ENCODE measurements at regions of chr18 and their contacts with region 1.

Region 1: DNA sequence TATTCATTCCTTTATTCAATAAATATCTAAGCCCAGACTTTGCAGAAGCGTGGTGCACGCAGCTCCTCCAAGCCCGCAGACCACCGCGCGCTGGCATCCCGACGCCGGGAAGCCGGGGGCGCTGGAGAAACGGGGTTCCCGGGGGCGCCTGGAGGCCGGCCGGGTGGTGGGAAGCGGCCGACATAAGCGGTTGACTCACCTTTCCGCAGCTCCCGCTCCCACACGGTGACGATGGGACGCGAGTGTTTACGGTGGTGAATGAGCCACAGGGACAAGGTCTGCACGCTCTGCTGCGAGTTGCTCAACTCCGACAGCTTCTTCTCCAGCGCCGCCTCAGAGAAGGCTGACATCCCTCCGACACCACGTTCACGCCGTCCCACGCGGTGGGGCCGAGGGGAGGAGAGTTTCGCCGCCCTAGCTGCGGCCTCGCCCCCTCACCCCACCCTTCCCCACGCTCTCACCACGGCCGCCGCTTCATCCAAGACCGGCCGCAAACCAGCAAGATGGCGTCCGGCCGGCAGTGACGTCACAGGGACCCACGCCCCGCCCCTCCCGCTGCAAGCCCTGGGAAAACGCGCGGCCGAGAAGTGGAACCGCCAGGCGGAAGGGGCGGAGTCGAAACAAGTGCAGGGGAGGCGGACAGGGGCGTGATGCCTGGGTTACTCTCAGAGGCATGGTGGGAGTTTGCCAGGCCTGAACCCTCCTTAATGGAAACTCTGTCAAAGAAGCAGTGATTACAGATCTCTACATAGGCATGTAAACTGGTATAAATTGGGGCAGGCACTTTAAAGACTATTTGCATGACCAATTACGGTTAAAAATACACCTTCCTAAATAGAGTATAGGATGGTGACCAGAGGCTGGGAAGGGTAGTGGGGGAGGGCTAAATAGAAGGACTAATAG is at the start of gene RPRD1A:
- DNase-seq: peak; percentile 94
- H3K4me3 Mint-ChIP-seq: peak within 1 kb of the TSS; percentile 90
- H3K27ac Mint-ChIP-seq: peak within 1 kb of the TSS; percentile 91
- H3K4me1 Mint-ChIP-seq: peaks cover 31% of the 10 kb centered on the region
- H3K27me3 Mint-ChIP-seq: peaks cover 3% of the 10 kb centered on the region
- total RNA-seq, gene RPRD1A: 20.5 and 24.8 TPM in 2 replicates

Region 2: DNA sequence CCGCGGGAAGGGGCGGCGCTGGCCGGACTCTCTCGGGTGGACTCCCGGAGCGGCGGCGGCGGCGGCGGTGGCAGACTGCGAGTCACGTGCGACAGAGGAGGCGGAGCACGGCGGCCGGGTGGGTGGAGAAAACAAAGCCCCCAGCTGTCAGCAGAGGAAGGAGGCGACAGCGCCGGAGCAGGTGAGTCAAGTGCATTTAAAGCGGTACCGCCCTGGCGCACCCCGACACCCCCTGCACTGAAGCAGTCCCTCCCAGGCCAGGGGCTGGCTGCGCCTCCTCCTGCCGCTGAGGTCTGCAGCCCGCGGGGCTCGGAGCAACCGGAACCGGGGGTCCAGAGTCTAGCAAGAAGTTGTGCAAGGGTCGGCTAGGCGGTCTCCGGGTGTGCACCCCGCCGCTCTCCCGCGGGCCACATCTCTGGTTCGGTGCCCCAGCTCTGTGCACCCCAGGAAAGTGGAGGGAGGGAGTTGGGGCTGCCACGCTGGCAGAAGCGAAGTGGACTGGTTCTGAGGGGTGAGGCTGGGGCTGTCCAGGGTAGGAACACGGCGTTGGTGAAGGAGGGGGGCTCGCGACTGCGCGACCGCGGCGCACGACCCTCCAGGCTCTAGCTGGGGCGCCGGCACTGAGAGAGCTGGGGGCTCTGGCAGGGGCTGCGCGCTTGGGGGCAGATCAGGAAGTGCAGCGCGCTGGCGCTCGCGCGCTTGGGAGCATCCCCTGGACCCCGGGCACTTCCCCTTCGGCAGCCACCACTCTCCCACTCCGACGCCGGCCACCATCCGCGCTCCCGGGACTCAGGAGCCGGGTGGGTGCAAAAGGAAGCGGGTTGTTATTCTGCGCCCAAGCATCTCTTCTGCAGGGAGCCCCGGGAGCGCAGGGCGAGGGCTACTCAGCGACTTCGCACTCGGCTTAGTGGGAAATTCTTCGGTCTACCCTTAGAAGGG is 1090.1 kb before region 1 on chr18:
- intact Hi-C with region 1: loop called (anchors 1 kb)
- DNase-seq: peak; percentile 55
- H3K4me3 Mint-ChIP-seq: peak overlapping the region; percentile 78
- H3K27ac Mint-ChIP-seq: no peak overlapping the region
- H3K4me1 Mint-ChIP-seq: peaks cover 25% of the 10 kb centered on the region
- H3K27me3 Mint-ChIP-seq: peaks cover 31% of the 10 kb centered on the region

Region 3: DNA sequence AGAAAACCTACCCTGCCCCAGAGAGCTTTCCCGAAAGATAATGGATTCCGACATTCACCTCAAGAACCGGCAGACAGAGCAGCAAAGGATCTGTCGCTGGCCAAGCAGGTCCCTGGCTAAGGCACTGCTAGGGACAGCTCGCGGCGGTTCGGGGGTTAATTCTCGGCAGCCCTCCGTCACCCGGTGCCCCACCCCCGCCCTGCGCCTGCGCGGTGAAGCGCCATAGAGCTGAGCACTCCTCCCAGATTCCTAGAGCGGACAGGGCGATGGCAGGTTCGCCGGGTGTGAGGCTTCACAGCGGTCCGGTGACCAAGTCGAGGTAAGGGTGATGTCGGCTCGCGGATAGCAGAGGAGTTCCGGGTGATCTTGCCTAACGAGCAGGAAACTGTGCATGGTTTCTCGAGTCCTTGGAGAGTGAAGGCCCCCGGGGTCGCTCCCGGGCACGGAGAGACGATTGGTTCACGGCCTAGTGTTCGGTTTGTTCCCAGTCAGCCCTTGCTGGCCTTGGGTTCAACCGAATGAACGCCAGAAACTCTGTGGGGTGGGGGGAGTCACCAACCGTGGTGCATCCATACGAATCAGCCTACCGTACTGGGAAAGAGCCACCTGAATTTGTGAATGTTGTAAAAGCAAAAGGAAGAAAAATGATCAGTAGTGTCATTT is 777.1 kb before region 1 on chr18 and contains the start of gene ZSCAN30:
- intact Hi-C with region 1: loop called (anchors 1 kb)
- DNase-seq: peak; percentile 94
- H3K4me3 Mint-ChIP-seq: peak within 1 kb of the TSS; percentile 100
- H3K27ac Mint-ChIP-seq: peak within 1 kb of the TSS; percentile 99
- H3K4me1 Mint-ChIP-seq: peaks cover 49% of the 10 kb centered on the region
- H3K27me3 Mint-ChIP-seq: no peaks in the 10 kb centered on the region
- total RNA-seq, gene ZSCAN30: 10.2 and 11.0 TPM in 2 replicates

Region 4: GRCh38 chr18:35580701-35581539 is 486.4 kb before region 1 on chr18:
- intact Hi-C with region 1: loop called (anchors 2 kb)
- DNase-seq: peak; percentile 44
- H3K4me3 Mint-ChIP-seq: peak overlapping the region; percentile 76
- H3K27ac Mint-ChIP-seq: no peak overlapping the region
- H3K4me1 Mint-ChIP-seq: peaks cover 33% of the 10 kb centered on the region
- H3K27me3 Mint-ChIP-seq: peaks cover 3% of the 10 kb centered on the region

Region 5: GRCh38 chr18:36015629-36016028 is 51.7 kb before region 1 on chr18:
- intact Hi-C with region 1: loop called (anchors 1 kb)
- DNase-seq: no peak
- H3K4me3 Mint-ChIP-seq: no peak overlapping the region
- H3K27ac Mint-ChIP-seq: no peak overlapping the region
- H3K4me1 Mint-ChIP-seq: no peaks in the 10 kb centered on the region
- H3K27me3 Mint-ChIP-seq: no peaks in the 10 kb centered on the region

Region 6: DNA sequence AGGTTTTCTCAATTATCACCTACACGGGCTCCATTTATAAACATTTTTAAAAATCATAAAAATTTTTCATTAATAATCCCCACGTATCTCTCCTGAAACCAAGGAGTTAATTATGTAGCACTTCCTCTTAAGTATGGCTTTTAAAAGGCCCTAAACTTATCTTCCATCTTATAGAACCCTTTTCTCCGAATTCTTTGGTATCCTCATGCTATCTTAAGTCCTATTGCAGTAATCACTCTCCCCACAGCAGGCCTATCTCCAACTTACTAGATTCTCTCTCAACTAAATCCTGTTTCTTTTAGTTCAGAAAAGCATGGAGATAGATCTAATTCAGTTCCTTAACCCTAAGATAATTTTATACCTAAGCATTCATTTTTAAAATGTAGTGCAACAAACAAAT is 26.2 kb before region 1 on chr18:
- intact Hi-C with region 1: no loop called
- DNase-seq: no peak
- H3K4me3 Mint-ChIP-seq: no peak overlapping the region
- H3K27ac Mint-ChIP-seq: no peak overlapping the region
- H3K4me1 Mint-ChIP-seq: peaks cover 18% of the 10 kb centered on the region
- H3K27me3 Mint-ChIP-seq: no peaks in the 10 kb centered on the region

Region 7: GRCh38 chr18:36107477-36107876 is 40.2 kb after region 1 on chr18:
- intact Hi-C with region 1: no loop called
- DNase-seq: no peak
- H3K4me3 Mint-ChIP-seq: no peak overlapping the region
- H3K27ac Mint-ChIP-seq: no peak overlapping the region
- H3K4me1 Mint-ChIP-seq: no peaks in the 10 kb centered on the region
- H3K27me3 Mint-ChIP-seq: peaks cover 4% of the 10 kb centered on the region

Region 8: GRCh38 chr18:36129300-36130038 is 62.2 kb after region 1 on chr18 and contains the starts of genes ELP2 and SLC39A6:
- intact Hi-C with region 1: loop called (anchors 1 kb)
- DNase-seq: peak; percentile 93
- H3K4me3 Mint-ChIP-seq: peak within 1 kb of the TSS; percentile 89
- H3K27ac Mint-ChIP-seq: peak within 1 kb of the TSS; percentile 91
- H3K4me1 Mint-ChIP-seq: peaks cover 53% of the 10 kb centered on the region
- H3K27me3 Mint-ChIP-seq: no peaks in the 10 kb centered on the region
- total RNA-seq, gene ELP2: 97.1 and 104 TPM in 2 replicates
- total RNA-seq, gene SLC39A6: 53.5 and 54.4 TPM in 2 replicates

Region 9: GRCh38 chr18:36281941-36282340 is 214.6 kb after region 1 on chr18:
- intact Hi-C with region 1: no loop called
- DNase-seq: no peak
- H3K4me3 Mint-ChIP-seq: no peak overlapping the region
- H3K27ac Mint-ChIP-seq: no peak overlapping the region
- H3K4me1 Mint-ChIP-seq: no peaks in the 10 kb centered on the region
- H3K27me3 Mint-ChIP-seq: peaks cover 20% of the 10 kb centered on the region

Measured in activated T-helper 1 cell treated with anti-CD3 and anti-CD28 coated beads, Interleukin-12 subunit alpha, Interleukin-12 subunit beta, Interleukin-2, Interleukin-4 antibody, amounts not matched to agents 30 ng/mL and 10 ng/mL and 1 ng/mL, durations not matched to agents 14 hours and 24 hours and 36 hours (primary cell).